K562 (cell line): ENCODE measurements at regions of chr20 and their contacts with region 1.

Region 1: GRCh38 chr20:2470423-2471193 is at the start of gene SNRPB:
- DNase-seq: peak; percentile 86 to 96 (median 89)
- ATAC-seq: peak; percentile 99
- H3K4me3 ChIP-seq: peak within 1 kb of the TSS; percentile 98
- H3K27ac ChIP-seq: peak within 1 kb of the TSS; percentile 97
- H3K4me1 ChIP-seq: peaks cover 6 to 7% of the 10 kb centered on the region in 2 experiments; a peak in 4 of 5 replicates
- H3K27me3 ChIP-seq: no peaks in the 10 kb centered on the region
- CTCF ChIP-seq: no peak
- EP300 ChIP-seq: peak; percentile 42
- POLR2A ChIP-seq: peak; percentile 96
- RAD21 ChIP-seq: no peak
- polyA plus RNA-seq, gene SNRPB: 13.1 to 65.7 TPM

Region 2: GRCh38 chr20:2485661-2486060 is 15.1 kb after region 1 on chr20:
- CTCF ChIA-PET with region 1: no interaction called
- POLR2A ChIA-PET with region 1: interaction called, 22 read pairs
- in situ Hi-C with region 1: no loop called
- intact Hi-C with region 1: no loop called
- DNase-seq: no peak
- ATAC-seq: no peak
- H3K4me3 ChIP-seq: no peak overlapping the region
- H3K27ac ChIP-seq: no peak overlapping the region
- H3K4me1 ChIP-seq: peaks cover 0 to 2% of the 10 kb centered on the region in 2 experiments; a peak in 1 of 5 replicates
- H3K27me3 ChIP-seq: no peaks in the 10 kb centered on the region
- CTCF ChIP-seq: no peak
- EP300 ChIP-seq: no peak
- POLR2A ChIP-seq: no peak
- RAD21 ChIP-seq: no peak

Region 3: DNA sequence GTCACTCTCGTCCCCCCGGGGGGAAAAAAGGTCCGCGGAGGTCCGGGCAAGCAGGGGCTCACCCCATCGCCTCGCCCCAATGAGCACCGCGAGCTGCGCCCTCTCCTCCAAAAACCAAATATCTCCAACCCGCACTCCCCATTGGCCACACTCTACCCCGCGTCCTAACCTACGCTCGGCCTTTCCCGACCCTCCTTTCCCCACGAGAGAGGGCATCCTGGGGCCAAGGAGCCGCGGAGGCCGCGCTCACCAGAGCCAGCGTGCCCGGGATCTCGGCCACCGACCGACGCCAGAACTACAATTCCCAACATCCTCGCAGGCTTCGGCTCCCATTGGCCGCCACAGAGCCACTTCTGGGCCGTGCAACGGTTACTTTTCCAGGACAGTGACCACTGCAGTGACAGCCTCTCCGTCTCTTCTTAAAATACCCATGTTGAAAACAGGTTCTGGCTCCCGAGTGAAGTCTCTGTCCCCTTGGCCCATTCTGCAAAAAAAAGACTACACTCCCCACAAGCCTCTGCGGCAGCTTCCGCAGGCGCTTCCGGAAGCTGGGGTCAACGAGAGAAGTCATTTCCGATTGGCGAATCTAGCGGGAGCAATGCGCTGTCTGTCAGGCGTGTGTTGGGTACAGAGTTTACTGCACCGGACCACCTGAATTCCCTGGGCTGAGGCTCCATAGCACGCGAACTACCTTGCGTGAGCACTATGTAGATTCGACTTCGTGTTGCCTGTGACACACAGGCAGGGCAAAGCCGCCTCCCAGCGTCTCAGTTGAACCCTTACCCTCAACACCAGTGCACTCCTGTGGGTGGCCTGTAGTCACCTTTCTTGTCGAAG is 38.2 kb after region 1 on chr20 and contains the start of gene ZNF343:
- CTCF ChIA-PET with region 1: no interaction called
- POLR2A ChIA-PET with region 1: interaction called, 10 read pairs
- in situ Hi-C with region 1: no loop called
- intact Hi-C with region 1: no loop called
- DNase-seq: peak; percentile 65 to 85 (median 77)
- ATAC-seq: peak; percentile 95
- H3K4me3 ChIP-seq: peak within 1 kb of the TSS; percentile 74
- H3K27ac ChIP-seq: peak within 1 kb of the TSS; percentile 94
- H3K4me1 ChIP-seq: peaks cover 9 to 16% of the 10 kb centered on the region in 2 experiments; a peak in 4 of 5 replicates
- H3K27me3 ChIP-seq: no peaks in the 10 kb centered on the region
- CTCF ChIP-seq: peak in 1 of 3 experiments; percentile 31; a peak in 2 of 6 replicates
- EP300 ChIP-seq: 0 out of 2 replicates have a peak, but pooled peaks have one; percentile 12
- POLR2A ChIP-seq: peak; percentile 81
- RAD21 ChIP-seq: no peak
- polyA plus RNA-seq, gene ZNF343: 1.4 to 4.0 TPM

Region 4: GRCh38 chr20:2523919-2524708 is 53.5 kb after region 1 on chr20:
- CTCF ChIA-PET with region 1: no interaction called
- POLR2A ChIA-PET with region 1: interaction called, 6 read pairs
- in situ Hi-C with region 1: loop called (anchors 5 kb)
- intact Hi-C with region 1: loop called (anchors 1 kb)
- DNase-seq: peak; percentile 79 to 88 (median 83)
- ATAC-seq: peak; percentile 81
- H3K4me3 ChIP-seq: peak overlapping the region; percentile 66
- H3K27ac ChIP-seq: peak overlapping the region; percentile 94
- H3K4me1 ChIP-seq: peaks cover 9 to 16% of the 10 kb centered on the region in 2 experiments; a peak in 4 of 5 replicates
- H3K27me3 ChIP-seq: no peaks in the 10 kb centered on the region
- CTCF ChIP-seq: peak; percentile 76 to 88 (median 86)
- EP300 ChIP-seq: no peak
- POLR2A ChIP-seq: no peak
- RAD21 ChIP-seq: peak; percentile 28 to 46; a peak in 3 of 4 replicates

Region 5: GRCh38 chr20:2643708-2644107 is 173.1 kb after region 1 on chr20:
- CTCF ChIA-PET with region 1: no interaction called
- POLR2A ChIA-PET with region 1: interaction called, 3 read pairs
- in situ Hi-C with region 1: loop called (anchors 10 kb)
- intact Hi-C with region 1: no loop called
- DNase-seq: no peak
- ATAC-seq: no peak
- H3K4me3 ChIP-seq: no peak overlapping the region
- H3K27ac ChIP-seq: no peak overlapping the region
- H3K4me1 ChIP-seq: no peaks in the 10 kb centered on the region; a peak in 1 of 5 replicates
- H3K27me3 ChIP-seq: peaks cover 0 to 6% of the 10 kb centered on the region in 2 experiments; a peak in 2 of 5 replicates
- CTCF ChIP-seq: no peak
- EP300 ChIP-seq: no peak
- POLR2A ChIP-seq: no peak
- RAD21 ChIP-seq: no peak

Region 6: DNA sequence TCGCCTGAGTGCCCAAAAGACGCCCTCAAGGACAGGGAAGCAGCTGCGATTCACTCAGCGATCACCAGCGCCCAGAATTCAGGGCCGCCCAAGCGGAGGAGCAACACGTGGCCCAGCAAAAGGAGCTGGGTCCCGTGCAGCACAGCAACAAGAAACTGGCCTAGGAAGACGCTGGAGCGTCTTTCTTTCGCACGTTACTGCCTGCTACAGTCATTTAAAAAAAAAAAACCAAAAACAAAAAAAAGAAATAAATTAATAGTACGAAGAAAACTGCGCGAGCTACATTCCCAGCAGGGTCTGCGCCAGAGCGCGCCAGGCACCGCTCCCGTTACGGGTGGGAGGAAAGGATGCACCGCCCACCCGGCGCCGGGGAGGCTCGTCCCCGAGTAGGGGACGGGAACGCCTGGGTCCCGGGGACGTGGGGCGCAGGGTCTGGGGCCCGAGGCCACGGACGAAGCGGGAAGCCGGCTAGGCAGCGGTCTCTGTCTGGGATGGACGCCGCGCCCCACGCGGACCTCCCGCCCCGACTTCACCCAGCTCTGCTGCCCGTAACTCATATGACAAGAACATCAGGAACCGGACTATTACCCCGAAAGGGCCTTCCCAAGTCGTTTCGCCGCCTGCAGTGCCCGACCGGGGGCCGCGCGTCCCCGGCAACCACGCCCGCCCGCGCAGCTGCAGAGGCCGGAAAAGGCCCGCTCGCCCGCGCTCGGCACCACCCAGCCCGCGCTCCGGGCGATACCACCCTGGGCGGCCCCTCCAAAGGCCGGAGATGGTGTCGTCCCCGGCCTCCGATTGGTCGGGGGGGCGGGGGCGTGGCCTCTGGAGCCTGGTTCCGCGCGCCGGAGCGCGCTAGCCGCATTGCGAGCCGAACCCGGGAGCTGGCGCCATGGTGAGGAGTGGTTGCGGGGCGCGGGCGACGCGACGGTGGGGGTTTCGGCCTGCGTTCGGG is 181.4 kb after region 1 on chr20 and contains the start of gene NOP56:
- CTCF ChIA-PET with region 1: no interaction called
- POLR2A ChIA-PET with region 1: interaction called, 17 read pairs
- in situ Hi-C with region 1: loop called (anchors 10 kb)
- intact Hi-C with region 1: loop called (anchors 5 kb)
- DNase-seq: peak; percentile 85 to 91 (median 88)
- ATAC-seq: peak; percentile 94
- H3K4me3 ChIP-seq: peak within 1 kb of the TSS; percentile 70
- H3K27ac ChIP-seq: peak within 1 kb of the TSS; percentile 94
- H3K4me1 ChIP-seq: peaks cover 19 to 22% of the 10 kb centered on the region in 2 experiments; a peak in 4 of 5 replicates
- H3K27me3 ChIP-seq: no peaks in the 10 kb centered on the region
- CTCF ChIP-seq: no peak
- EP300 ChIP-seq: no peak
- POLR2A ChIP-seq: peak; percentile 86
- RAD21 ChIP-seq: no peak
- polyA plus RNA-seq, gene NOP56: 295 to 439 TPM